Activated naive CD4-positive, alpha-beta T cell treated with anti-CD3 and anti-CD28 coated beads for 36 hours (primary cell): ENCODE measurements at regions of chr22 and their contacts with region 1.

Region 1: DNA sequence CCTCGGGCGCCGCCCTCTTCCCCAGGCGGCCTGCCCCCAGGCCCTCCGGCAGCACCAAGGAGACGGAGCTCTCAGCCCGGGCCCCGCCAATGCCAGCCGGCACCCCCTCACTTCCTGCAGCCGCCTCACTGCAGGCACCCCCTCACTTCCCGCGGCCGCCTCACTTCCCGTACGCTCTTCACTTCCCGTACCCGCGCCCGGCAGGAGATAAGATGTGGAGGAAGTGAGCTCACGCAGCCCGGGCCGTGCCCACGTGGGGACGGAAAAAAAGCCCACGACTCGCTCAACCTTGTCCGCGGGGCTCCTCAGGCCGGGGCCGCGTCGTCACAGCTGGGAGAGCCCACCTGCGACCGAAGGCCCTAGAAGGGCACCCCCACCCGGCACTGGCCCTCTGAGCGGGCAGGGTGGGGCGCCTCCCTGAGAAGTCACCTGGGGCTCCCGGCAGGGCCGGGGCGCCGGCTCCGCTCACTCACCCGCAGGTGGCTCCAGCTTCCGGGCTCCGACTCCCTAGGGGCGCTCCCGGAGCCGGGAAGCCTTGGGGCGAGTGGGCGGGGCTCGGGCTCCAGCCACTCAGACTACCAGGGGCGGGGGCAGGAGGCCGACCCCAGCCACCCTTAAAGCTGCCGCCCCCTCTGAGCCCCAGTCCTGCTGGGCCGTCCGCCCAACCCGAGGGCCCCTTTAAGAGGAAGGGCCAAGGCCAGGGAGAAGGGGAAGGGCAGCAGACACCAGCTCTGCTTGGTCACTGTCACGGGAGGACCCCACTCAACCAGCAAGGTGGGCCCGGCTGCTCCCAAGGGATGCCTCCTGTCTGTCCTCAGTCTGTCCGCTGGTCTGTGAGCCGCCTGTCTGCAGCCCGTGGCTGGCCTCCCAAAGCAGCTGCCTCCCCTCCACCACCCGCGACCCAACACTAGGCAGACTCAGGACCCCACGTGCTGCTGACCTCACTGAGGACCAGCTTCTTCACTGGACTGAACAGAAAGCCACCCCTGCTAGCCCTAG is 31.4 kb downstream of the PISD start:
- DNase-seq: peak; percentile 91
- H3K4me3 Mint-ChIP-seq: peak overlapping the region; percentile 84
- H3K27ac Mint-ChIP-seq: peak overlapping the region; percentile 94
- H3K4me1 Mint-ChIP-seq: peaks cover 56% of the 10 kb centered on the region
- H3K27me3 Mint-ChIP-seq: no peaks in the 10 kb centered on the region

Region 2: GRCh38 chr22:31107178-31107893 is 523.3 kb before region 1 on chr22 and contains the start of gene SELENOM:
- CTCF ChIA-PET with region 1: no interaction called
- intact Hi-C with region 1: loop called (anchors 5 kb)
- DNase-seq: peak; percentile 92
- H3K4me3 Mint-ChIP-seq: peak within 1 kb of the TSS; percentile 89
- H3K27ac Mint-ChIP-seq: peak within 1 kb of the TSS; percentile 76
- H3K4me1 Mint-ChIP-seq: peaks cover 19% of the 10 kb centered on the region
- H3K27me3 Mint-ChIP-seq: no peaks in the 10 kb centered on the region
- total RNA-seq, gene SELENOM: 9.3 to 11.0 TPM

Region 3: DNA sequence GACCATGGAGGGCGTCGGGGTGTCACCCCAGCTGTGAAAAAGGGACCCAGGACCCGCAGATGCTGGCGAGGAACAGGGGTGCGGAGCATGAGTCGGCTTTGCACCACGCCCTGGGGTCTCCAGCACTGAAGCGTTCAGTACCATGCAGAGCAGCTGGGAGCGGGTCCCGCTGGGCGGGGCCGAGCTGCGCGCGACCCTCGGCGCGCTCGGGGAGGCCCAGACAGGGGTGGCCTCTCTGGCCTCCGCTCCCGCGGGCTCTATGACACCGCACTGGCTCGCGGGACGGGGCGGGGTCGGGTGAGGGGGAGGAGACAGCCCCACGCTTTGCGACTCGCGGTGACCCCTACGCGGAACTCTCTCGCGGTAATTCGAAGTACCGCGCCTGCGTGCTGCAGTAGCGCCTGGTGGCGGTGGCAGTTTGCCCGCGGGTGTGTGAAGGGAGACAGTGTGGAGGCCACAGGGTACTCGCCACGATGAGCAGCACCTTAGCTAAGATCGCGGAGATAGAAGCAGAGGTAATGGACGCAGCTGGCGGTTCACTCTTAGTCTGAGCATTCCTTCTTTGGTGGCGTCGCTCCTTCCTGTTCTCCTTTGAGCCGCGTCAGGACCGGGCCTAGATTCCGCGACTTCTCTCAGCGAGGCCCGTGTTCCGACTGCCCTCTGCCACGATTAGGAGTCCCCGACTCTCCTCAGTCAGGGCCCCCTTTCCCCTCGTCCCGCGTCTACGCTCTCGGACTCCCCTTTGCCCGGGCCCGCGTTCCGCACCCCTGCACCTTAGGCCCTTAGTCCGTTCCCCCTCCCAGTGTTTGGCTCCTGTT is 231.2 kb before region 1 on chr22 and contains the start of gene DRG1:
- CTCF ChIA-PET with region 1: no interaction called
- intact Hi-C with region 1: loop called (anchors 5 kb)
- DNase-seq: peak; percentile 98
- H3K4me3 Mint-ChIP-seq: peak within 1 kb of the TSS; percentile 92
- H3K27ac Mint-ChIP-seq: peak within 1 kb of the TSS; percentile 82
- H3K4me1 Mint-ChIP-seq: peaks cover 21% of the 10 kb centered on the region
- H3K27me3 Mint-ChIP-seq: no peaks in the 10 kb centered on the region
- total RNA-seq, gene DRG1: 77.1 to 78.7 TPM

Region 4: DNA sequence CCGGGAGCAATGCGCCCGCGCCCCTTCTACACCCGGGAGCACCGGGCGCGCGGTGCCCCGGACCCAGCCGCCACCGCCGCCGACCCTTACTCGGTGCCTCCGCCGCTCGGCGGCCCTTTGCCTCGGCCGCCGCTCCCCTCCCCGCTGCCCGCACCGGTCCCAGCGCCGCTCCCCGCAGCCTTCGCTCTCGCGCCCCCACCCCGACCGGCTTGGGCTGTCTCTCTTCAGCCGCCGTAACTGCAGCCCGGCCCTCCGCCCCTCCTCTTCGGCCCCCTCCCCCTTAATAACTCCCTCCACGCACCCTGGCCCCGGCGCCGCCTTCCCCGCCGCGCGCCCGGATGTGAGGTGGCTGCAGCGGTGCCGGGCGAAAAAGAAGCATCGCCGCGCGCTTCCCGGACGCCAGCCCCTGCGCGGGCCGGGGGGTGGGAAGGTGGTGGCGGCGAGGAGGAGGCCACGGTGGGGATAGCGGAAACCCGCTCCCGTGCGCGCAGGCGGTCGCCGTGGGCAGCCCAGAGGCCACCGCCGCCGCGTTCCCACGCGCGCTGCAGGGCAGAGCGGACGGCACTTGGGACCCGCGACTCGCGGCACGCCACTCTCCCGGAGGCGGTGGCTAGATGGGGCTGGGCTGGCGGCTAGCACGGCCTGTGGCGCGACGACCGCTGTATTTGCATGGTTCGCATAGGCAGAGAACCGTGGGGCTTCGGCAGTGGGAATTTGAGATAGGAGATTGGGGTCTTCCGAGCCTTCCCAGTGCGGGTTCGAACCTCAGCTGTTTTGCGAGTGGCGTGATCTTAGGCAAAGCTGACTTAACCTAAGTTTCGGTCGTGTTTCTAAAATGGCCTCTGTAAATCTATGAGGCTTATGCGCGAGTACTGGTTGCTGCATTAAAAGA is 140.8 kb before region 1 on chr22 and contains the start of gene EIF4ENIF1:
- CTCF ChIA-PET with region 1: interaction called, 5 read pairs
- intact Hi-C with region 1: loop called (anchors 1 kb)
- DNase-seq: peak; percentile 88
- H3K4me3 Mint-ChIP-seq: peak within 1 kb of the TSS; percentile 83
- H3K27ac Mint-ChIP-seq: peak within 1 kb of the TSS; percentile 97
- H3K4me1 Mint-ChIP-seq: peaks cover 50% of the 10 kb centered on the region
- H3K27me3 Mint-ChIP-seq: no peaks in the 10 kb centered on the region
- total RNA-seq, gene EIF4ENIF1: 28.1 to 29.0 TPM

Region 5: GRCh38 chr22:31561238-31561887 is 69.3 kb before region 1 on chr22:
- CTCF ChIA-PET with region 1: interaction called, 14 read pairs
- intact Hi-C with region 1: loop called (anchors 1 kb)
- DNase-seq: peak; percentile 83
- H3K4me3 Mint-ChIP-seq: no peak overlapping the region
- H3K27ac Mint-ChIP-seq: peak overlapping the region; percentile 20
- H3K4me1 Mint-ChIP-seq: no peaks in the 10 kb centered on the region
- H3K27me3 Mint-ChIP-seq: no peaks in the 10 kb centered on the region

Region 6: GRCh38 chr22:31646186-31647089 is 15.8 kb after region 1 on chr22:
- CTCF ChIA-PET with region 1: interaction called, 4 read pairs
- intact Hi-C with region 1: loop called (anchors 1 kb)
- DNase-seq: peak; percentile 76
- H3K4me3 Mint-ChIP-seq: no peak overlapping the region
- H3K27ac Mint-ChIP-seq: peak overlapping the region; percentile 91
- H3K4me1 Mint-ChIP-seq: peaks cover 53% of the 10 kb centered on the region
- H3K27me3 Mint-ChIP-seq: no peaks in the 10 kb centered on the region